Heart right ventricle (tissue), 16 donors: ENCODE measurements at regions of chr2 and their contacts with region 1.

Region 1: GRCh38 chr2:225104971-225105370 is 62.7 kb upstream of the DOCK10 start:
- DNase-seq: no peak
- ATAC-seq: no peak
- H3K4me3 ChIP-seq: no peak overlapping the region
- H3K27ac ChIP-seq: no peak overlapping the region
- H3K4me1 ChIP-seq: no peaks in the 10 kb centered on the region
- H3K27me3 ChIP-seq: no peaks in the 10 kb centered on the region
- CTCF ChIP-seq: no peak

Region 2: DNA sequence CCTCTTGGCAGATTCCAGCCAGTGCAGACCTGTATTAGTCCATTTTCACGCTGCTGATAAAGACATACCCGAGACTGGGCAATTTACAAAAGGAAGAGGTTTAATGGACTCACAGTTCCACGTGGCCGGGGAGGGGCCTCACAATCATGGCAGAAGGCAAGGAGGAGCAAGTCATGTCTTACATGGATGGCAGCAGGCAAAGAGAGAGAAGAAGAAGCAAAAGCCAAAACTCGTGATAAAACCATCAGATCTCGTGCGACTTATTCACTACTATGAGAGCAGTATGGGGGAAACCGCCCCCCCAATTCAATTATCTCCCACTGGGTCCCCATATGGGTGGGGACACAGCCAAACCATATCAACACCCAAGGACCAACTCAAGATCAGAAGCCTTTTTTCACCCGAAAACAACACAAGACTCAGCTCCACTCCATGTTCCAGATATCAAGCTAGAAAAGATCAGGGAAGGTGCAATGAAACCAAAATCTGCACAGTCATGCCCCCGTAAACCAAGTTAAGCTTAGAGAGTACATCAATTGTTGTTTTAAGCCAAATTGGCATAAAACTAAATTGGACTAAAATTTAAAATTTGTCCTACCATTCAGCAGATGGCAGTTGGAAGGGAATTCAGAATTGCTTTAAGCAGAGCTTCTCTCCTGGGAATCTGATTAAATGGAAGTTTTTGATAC is 647.4 kb before region 1 on chr2:
- intact Hi-C with region 1: loop called in 1 of 10 experiments (anchors 5 kb)
- DNase-seq: no peak
- ATAC-seq: no peak
- H3K4me3 ChIP-seq: no peak overlapping the region
- H3K27ac ChIP-seq: no peak overlapping the region
- H3K4me1 ChIP-seq: no peaks in the 10 kb centered on the region
- H3K27me3 ChIP-seq: peaks cover 0 to 3% (median 0%) of the 10 kb centered on the region in 7 donors
- CTCF ChIP-seq: no peak